GM18951 (cell line): ENCODE measurements at regions of chr7 and their contacts with region 1.

Region 1: GRCh38 chr7:93092757-93093370 is 24.9 kb downstream of the SAMD9 start:
- POLR2A ChIP-seq: no peak

Region 2: DNA sequence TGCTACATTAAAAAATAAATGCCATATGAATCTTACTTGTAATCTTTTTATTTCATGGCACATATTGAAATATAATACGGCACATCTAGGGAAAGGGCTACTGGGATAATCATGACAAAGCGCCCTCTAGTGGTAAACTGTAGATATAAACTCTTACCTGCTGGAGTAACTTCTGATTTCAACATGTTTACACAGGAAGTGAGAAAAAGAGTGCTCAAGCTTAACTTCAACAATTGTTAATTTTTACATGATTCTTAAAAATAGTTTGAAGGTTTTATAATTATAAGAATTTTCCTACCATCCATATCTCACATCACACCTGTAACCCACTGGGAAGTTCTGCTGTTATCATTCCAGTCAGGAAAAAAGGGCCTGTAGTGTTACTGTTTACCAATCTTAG is 135.4 kb after region 1 on chr7:
- in situ Hi-C with region 1: loop called (anchors 10 kb)
- POLR2A ChIP-seq: no peak

Region 3: GRCh38 chr7:93530701-93531100 is 437.8 kb after region 1 on chr7:
- in situ Hi-C with region 1: no loop called
- POLR2A ChIP-seq: no peak